ENCODE measurements at regions of chr15 and their contacts with region 1.

Region 1: DNA sequence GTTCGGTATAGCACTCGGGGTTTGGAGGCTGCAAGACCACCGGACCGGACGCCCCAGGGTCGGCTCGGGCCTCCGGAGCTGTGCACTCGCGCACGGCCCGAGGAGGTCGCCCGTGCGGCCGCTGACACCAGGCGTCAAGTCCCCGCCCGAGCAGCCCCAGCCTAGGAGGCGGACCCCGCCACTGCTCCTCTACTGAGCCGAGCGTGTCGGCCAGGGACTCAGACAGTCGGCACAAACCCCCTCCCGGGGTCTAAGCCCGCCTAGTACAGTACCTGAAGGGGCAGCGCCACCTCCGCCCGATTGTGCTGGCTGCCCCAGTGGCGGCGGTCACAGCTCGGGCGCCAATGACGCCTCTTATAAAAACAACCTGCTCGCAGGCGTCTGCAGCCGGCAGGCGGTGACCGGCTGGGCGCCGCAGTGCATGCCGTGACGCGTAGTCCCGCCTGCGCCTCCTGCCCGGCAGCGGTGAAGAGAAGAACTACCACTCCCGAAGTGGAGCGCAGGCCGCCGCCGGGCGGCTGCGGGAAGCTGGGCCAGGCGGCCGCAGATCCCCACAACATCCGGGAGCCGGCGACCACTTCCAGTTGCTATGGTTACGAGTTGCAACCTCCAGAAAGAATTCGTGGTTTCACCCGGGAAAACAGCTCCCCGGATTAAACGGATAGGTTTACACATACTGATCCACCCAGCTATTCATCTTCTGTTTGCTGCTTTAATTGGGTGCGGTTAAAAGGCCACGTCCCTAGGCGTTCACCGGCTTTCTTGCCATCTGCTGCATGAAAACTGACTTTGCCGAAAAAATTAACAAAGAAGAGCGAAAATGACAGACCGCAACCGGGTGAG is at the starts of genes CCPG1 and PIERCE2:
- DNase-seq: peak; percentile 58
- H3K4me3 ChIP-seq: peak within 1 kb of the TSS; percentile 89
- CTCF ChIP-seq: peak; percentile 85

Region 2: GRCh38 chr15:55124616-55125015 is 283.6 kb before region 1 on chr15:
- CTCF ChIA-PET with region 1: no interaction called
- POLR2A ChIA-PET with region 1: no interaction called
- DNase-seq: no peak
- H3K4me3 ChIP-seq: no peak overlapping the region
- CTCF ChIP-seq: no peak

Region 3: DNA sequence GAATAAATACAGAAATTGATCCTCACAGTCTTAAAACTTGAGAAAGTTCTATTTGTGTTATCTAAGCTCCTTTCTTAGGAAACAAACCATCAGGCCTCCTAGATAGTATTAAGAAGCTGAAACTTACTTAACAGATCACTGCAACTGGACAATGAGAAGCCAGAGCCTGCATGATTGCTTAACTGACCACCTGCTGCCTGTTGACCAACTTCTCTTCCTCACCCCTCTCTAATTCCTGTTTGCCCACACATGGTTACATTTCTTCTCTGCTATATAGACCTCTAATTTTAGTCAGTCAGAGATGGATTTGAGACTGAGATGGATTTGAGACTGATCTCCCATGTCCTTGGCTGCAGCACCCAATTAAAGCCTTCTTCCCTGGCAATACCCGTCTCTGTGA is 13.5 kb before region 1 on chr15:
- CTCF ChIA-PET with region 1: interaction called, 38 read pairs
- POLR2A ChIA-PET with region 1: interaction called, 3 read pairs
- DNase-seq: no peak
- H3K4me3 ChIP-seq: no peak overlapping the region
- CTCF ChIP-seq: no peak

Region 4: DNA sequence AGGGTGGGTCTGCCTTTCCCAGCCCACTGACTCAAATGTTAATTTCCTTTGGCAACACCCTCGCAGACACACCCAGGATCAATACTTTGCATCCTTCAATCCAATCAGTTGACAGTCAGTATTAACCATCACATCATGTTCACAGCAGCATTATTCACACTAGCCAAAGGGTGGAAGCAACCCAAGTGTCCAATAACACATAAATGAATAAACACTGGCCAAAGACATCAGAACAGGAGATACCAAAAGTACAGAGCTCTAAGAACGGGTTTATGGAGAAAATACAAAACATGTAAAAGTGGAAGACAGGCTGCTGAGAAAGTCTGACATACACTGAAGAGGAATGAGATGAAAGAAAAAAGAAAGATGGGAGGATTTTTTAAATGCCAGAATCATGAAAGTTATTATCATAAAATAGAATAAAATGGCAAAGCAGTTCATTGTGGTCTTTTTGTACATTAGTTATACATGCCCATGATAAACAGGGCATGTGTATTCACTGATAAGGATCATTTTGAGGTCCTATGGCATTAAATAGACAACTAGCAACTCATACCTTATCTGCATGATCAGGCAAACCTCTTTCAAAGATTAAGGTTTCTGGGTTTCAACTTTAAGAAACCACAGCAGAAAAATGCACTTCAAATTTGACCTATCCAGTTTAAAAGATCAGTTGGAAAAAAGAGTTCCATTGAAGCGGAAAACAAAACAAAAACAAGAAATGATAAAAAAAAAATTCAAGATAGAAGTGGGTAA is 76.9 kb after region 1 on chr15:
- CTCF ChIA-PET with region 1: no interaction called
- POLR2A ChIA-PET with region 1: no interaction called
- DNase-seq: no peak
- H3K4me3 ChIP-seq: no peak overlapping the region
- CTCF ChIP-seq: no peak